Panc1 (cell line): ENCODE measurements at regions of chr20 and their contacts with region 1.

Region 1: GRCh38 chr20:49219089-49219923 is at the start of gene DDX27:
- DNase-seq: peak; percentile 99
- ATAC-seq: peak; percentile 97
- H3K4me3 ChIP-seq: peak within 1 kb of the TSS; percentile 96 to 99
- H3K27ac ChIP-seq: peak within 1 kb of the TSS; percentile 99
- H3K4me1 ChIP-seq: peaks cover 10% of the 10 kb centered on the region; the same call in 1 of the 2 replicates
- H3K27me3 ChIP-seq: no peaks in the 10 kb centered on the region
- CTCF ChIP-seq: no peak
- total RNA-seq, gene DDX27: 63.4 TPM

Region 2: GRCh38 chr20:49132995-49133478 is 86.3 kb before region 1 on chr20:
- CTCF ChIA-PET with region 1: interaction called, 15 read pairs
- POLR2A ChIA-PET with region 1: no interaction called
- in situ Hi-C with region 1: no loop called
- intact Hi-C with region 1: loop called (anchors 5 kb)
- DNase-seq: peak; percentile 18
- ATAC-seq: peak; percentile 86
- H3K4me3 ChIP-seq: no peak overlapping the region
- H3K27ac ChIP-seq: no peak overlapping the region
- H3K4me1 ChIP-seq: no peaks in the 10 kb centered on the region
- H3K27me3 ChIP-seq: no peaks in the 10 kb centered on the region
- CTCF ChIP-seq: peak; percentile 72

Region 3: GRCh38 chr20:49268600-49269365 is 49.5 kb after region 1 on chr20:
- CTCF ChIA-PET with region 1: no interaction called
- POLR2A ChIA-PET with region 1: no interaction called
- in situ Hi-C with region 1: no loop called
- intact Hi-C with region 1: no loop called
- DNase-seq: no peak
- ATAC-seq: no peak
- H3K4me3 ChIP-seq: peak overlapping the region in 1 of 2 experiments; percentile 5; a peak in 1 of 4 replicates
- H3K27ac ChIP-seq: no peak overlapping the region
- H3K4me1 ChIP-seq: no peaks in the 10 kb centered on the region; the same call in 1 of the 2 replicates
- H3K27me3 ChIP-seq: no peaks in the 10 kb centered on the region
- CTCF ChIP-seq: no peak